Panc1 (cell line): ENCODE measurements at regions of chr20 and their contacts with region 1.

Region 1: GRCh38 chr20:19784511-19785172 is 26.6 kb downstream of the RIN2 start:
- DNase-seq: peak; percentile 74
- ATAC-seq: peak; percentile 88
- H3K4me3 ChIP-seq: peak overlapping the region in 1 of 2 experiments; percentile 40; a peak in 2 of 4 replicates
- H3K27ac ChIP-seq: peak overlapping the region; percentile 65
- H3K4me1 ChIP-seq: peaks cover 42% of the 10 kb centered on the region
- H3K27me3 ChIP-seq: no peaks in the 10 kb centered on the region
- CTCF ChIP-seq: peak; percentile 85

Region 2: DNA sequence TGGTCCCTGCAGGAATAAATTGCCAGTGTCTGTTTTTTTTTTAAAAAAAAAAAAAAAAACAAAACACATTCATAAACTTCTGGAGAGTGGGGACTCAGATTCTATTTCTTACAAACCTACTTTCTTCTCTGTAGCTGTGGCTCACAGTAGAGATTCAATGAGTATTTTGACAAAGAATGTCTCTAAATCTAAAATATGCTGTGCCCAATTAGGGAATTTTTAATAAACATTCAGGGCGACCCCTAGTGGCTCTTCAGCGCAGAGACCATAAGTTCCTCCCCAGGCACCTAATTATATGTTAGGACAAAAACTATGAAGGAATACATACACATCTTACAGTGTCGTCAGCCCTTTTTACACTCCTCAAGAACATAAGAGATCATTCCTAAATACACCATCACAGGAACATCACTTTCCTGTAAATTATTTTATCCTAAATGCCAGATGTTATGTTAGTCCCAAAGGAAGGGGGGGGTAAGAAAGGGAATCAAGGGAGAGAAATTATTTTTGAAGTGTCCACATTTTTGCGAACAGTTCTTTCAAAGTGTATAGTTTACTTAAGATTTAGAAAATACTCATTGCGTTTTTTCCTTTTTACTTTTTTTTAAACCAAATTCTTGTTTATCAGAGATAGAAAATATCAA is 210.7 kb after region 1 on chr20:
- CTCF ChIA-PET with region 1: no interaction called
- POLR2A ChIA-PET with region 1: no interaction called
- in situ Hi-C with region 1: no loop called
- intact Hi-C with region 1: loop called (anchors 1 kb)
- DNase-seq: no peak
- ATAC-seq: no peak
- H3K4me3 ChIP-seq: no peak overlapping the region
- H3K27ac ChIP-seq: peak overlapping the region; percentile 99
- H3K4me1 ChIP-seq: peaks cover 57% of the 10 kb centered on the region
- H3K27me3 ChIP-seq: no peaks in the 10 kb centered on the region
- CTCF ChIP-seq: peak; percentile 82; the same call in 1 of the 2 replicates